Uterus (tissue), 4 donors: ENCODE measurements at regions of chr9 and their contacts with region 1.

Region 1: GRCh38 chr9:130780865-130781504 is 54.1 kb upstream of the ABL1 start:
- DNase-seq: peak; percentile 85 to 92
- H3K4me3 ChIP-seq: peak overlapping the region; percentile 32 to 38
- H3K27ac ChIP-seq: peak overlapping the region; percentile 93 to 99
- H3K4me1 ChIP-seq: peaks cover 17 to 21% of the 10 kb centered on the region in 2 donors
- H3K27me3 ChIP-seq: no peaks in the 10 kb centered on the region
- CTCF ChIP-seq: no peak
- POLR2A ChIP-seq: peak; percentile 82 to 83

Region 2: GRCh38 chr9:130715270-130716077 is 65.5 kb before region 1 on chr9:
- intact Hi-C with region 1: no loop called
- DNase-seq: no peak
- H3K4me3 ChIP-seq: peak overlapping the region; percentile 14 to 94
- H3K27ac ChIP-seq: no peak overlapping the region
- H3K4me1 ChIP-seq: no peaks in the 10 kb centered on the region
- H3K27me3 ChIP-seq: no peaks in the 10 kb centered on the region
- CTCF ChIP-seq: no peak
- POLR2A ChIP-seq: no peak

Region 3: DNA sequence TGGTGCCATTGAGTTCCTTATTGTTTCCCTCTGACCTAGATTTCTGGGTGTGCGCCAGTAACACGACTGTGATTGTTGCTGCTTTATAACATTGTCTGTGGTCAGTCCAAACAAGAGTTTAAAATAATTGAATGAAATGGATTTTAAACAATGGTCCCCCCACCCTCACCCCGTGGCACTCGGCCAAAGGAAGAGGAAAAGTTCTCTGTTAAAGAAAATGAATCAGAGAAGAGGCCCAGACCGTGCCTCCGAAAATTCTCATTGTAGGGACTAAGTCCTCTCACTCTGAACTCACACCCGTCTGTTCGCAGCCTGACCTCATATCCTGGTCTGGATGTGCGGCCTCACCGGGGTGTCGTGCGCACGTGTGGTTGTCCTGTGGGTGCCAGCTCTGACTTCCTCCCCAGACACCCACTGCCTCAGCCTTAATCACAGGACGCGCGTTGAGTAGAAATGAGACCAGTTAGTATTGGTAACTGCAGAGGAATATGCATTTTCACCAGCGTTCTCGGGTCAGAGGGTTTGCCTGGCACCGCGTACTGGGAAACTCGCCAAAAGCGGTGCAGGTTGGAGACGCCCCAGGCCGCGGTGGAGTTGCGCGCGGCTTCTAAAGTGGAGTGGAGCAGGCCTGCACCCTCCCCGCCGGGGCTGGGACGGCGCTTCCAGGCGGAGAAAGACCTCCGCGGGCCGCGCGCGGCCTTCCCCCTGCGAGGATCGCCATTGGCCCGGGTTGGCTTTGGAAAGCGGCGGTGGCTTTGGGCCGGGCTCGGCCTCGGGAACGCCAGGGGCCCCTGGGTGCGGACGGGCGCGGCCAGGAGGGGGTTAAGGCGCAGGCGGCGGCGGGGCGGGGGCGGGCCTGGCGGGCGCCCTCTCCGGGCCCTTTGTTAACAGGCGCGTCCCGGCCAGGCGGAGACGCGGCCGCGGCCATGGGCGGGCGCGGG is 53.7 kb after region 1 on chr9 and contains the start of gene ABL1:
- intact Hi-C with region 1: loop called (anchors 10 kb)
- DNase-seq: peak; percentile 71 to 75
- H3K4me3 ChIP-seq: peak within 1 kb of the TSS; percentile 53 to 85
- H3K27ac ChIP-seq: peak within 1 kb of the TSS; percentile 96 to 98
- H3K4me1 ChIP-seq: peaks cover 10 to 16% of the 10 kb centered on the region in 2 donors
- H3K27me3 ChIP-seq: no peaks in the 10 kb centered on the region
- CTCF ChIP-seq: peak in 2 of 4 experiments; percentile 13 to 14
- POLR2A ChIP-seq: peak in 1 of 2 donors; percentile 22
- total RNA-seq, gene ABL1: 22.5 to 117 (median 57.8) TPM